ENCODE measurements at regions of chr6 and their contacts with region 1.

Region 1: GRCh38 chr6:143450453-143451371 is at the starts of genes ADAT2 and PEX3:
- DNase-seq: peak; percentile 95
- H3K4me3 ChIP-seq: peak within 1 kb of the TSS; percentile 94
- H3K27ac ChIP-seq: peak within 1 kb of the TSS; percentile 72
- H3K4me1 ChIP-seq: peaks cover 36% of the 10 kb centered on the region
- CTCF ChIP-seq: no peak
- total RNA-seq, gene ADAT2: 17.6 and 21.7 TPM in 2 replicates
- total RNA-seq, gene PEX3: 10.9 and 14.8 TPM in 2 replicates

Region 2: GRCh38 chr6:143368426-143368825 is 82.3 kb before region 1 on chr6:
- CTCF ChIA-PET with region 1: no interaction called
- POLR2A ChIA-PET with region 1: no interaction called
- intact Hi-C with region 1: no loop called
- DNase-seq: no peak
- H3K4me3 ChIP-seq: no peak overlapping the region
- H3K27ac ChIP-seq: no peak overlapping the region
- H3K4me1 ChIP-seq: no peaks in the 10 kb centered on the region
- CTCF ChIP-seq: no peak

Region 3: GRCh38 chr6:143536865-143537691 is 86.4 kb after region 1 on chr6:
- CTCF ChIA-PET with region 1: no interaction called
- POLR2A ChIA-PET with region 1: interaction called, 3 read pairs
- intact Hi-C with region 1: loop called (anchors 2 kb)
- DNase-seq: no peak
- H3K4me3 ChIP-seq: peak overlapping the region; percentile 47
- H3K27ac ChIP-seq: no peak overlapping the region
- H3K4me1 ChIP-seq: no peaks in the 10 kb centered on the region
- CTCF ChIP-seq: no peak

Region 4: DNA sequence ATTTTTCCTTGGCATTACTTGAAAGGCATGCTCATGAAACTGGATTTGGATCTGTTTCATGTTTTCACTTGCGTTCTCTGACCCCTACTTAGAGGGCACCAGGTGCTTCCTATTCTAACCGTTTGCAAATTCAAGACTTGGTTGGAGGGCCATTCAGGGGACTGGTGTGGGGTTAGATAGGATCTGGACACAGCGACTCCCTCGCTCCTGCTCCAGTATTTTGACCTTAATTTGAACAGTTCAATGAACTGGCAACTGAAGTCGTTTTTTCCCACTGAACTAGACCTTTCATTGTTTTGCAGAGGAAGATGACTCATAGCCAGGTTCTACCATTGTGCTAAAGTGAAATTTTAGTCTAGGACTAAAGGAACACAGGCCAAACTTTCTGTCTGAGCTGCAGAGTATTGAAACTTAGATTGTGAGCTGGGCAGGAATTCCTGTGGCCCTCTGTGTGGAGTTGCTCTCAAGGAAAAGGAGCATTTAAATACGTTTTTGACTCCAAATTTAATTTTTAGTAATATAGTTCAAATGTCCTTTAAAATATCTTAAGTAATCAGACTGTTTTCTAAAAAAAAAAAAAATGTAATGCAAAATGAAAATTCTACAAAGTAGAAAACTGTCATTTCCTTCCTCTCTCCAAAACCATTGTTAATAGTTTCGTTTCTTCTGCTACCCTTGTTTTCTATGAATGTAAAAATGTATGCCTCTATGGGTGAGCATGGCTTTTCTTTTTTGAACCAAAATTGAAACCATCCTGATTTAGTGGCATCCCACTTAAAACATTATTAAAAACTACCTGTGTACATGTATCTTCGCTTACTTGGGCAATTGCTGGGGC is 899.2 kb after region 1 on chr6:
- CTCF ChIA-PET with region 1: no interaction called
- POLR2A ChIA-PET with region 1: no interaction called
- intact Hi-C with region 1: loop called (anchors 10 kb)
- DNase-seq: peak; percentile 26
- H3K4me3 ChIP-seq: peak overlapping the region; percentile 34
- H3K27ac ChIP-seq: peak overlapping the region; percentile 15
- H3K4me1 ChIP-seq: peaks cover 38% of the 10 kb centered on the region
- CTCF ChIP-seq: no peak

Measured in OCI-LY7 (cell line).